Right ventricle myocardium superior (tissue), 1 donor: ENCODE measurements at regions of chr7 and their contacts with region 1.

Region 1: GRCh38 chr7:15737601-15738000 is 51.1 kb upstream of the MEOX2 start:
- DNase-seq: no peak
- ATAC-seq: no peak

Region 2: DNA sequence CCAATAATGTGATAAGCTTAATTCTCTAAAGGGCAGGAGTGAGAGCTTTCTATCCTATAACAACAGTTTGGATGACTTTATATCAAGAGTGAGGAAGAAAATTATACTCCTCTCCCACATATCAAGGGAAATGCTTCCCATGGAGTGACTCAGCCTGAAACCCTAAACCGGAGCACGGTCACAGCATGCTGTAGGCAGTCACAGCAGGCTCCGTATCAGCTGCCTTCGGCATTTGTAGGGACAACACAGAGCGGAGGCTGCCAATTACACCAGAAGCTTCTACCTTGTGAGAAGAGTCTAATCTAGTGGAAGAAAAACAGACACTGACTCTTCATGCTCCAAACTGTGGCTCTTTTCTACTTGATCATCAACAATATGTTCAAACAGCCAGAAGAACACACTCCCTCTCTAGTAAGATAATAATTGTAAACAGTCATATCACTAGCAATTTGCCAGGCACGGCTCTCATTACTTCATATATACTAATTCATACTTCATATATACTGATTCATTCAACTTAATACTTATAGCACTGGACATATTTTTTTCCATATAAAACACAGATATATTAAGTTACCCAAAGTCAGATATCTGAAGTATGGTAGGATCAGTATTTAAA is 900.9 kb before region 1 on chr7:
- intact Hi-C with region 1: no loop called
- DNase-seq: peak; percentile 48
- ATAC-seq: peak; percentile 88

Region 3: DNA sequence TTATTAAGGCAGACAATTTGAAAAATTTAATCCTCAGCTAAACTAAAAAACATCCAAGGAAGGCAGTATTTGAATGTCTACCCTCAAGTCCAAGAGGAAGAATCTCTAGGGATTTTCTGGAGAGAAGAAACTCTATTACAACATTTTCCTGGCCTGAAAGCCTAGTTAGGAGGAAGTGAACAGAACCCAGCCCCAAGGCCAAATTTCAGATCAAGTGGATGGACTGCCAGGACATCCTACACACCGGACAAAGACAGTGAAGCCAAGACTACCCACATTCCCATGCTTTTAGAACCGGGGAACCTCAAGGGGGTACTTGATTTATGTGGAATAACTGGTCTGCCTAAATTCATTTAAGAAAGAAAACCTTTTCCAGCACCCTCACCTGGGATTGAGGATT is 57.8 kb after region 1 on chr7:
- intact Hi-C with region 1: loop called (anchors 2 kb)
- DNase-seq: no peak
- ATAC-seq: peak; percentile 83